Calu3 (cell line): ENCODE measurements at regions of chr10 and their contacts with region 1.

Region 1: GRCh38 chr10:123582084-123582989 is 83.8 kb upstream of the GPR26 start:
- DNase-seq: peak; percentile 77
- H3K4me3 Mint-ChIP-seq: no peak overlapping the region
- H3K27ac Mint-ChIP-seq: no peak overlapping the region
- H3K4me1 Mint-ChIP-seq: no peaks in the 10 kb centered on the region
- H3K27me3 Mint-ChIP-seq: peaks cover 70% of the 10 kb centered on the region
- CTCF ChIP-seq: peak; percentile 57

Region 2: GRCh38 chr10:123427392-123427791 is 154.9 kb before region 1 on chr10:
- CTCF ChIA-PET with region 1: no interaction called
- intact Hi-C with region 1: no loop called
- DNase-seq: no peak
- H3K4me3 Mint-ChIP-seq: no peak overlapping the region
- H3K27ac Mint-ChIP-seq: no peak overlapping the region
- H3K4me1 Mint-ChIP-seq: no peaks in the 10 kb centered on the region
- H3K27me3 Mint-ChIP-seq: peaks cover 28% of the 10 kb centered on the region
- CTCF ChIP-seq: no peak

Region 3: GRCh38 chr10:123868038-123869019 is 286.0 kb after region 1 on chr10:
- CTCF ChIA-PET with region 1: no interaction called
- intact Hi-C with region 1: loop called (anchors 10 kb)
- DNase-seq: no peak
- H3K4me3 Mint-ChIP-seq: no peak overlapping the region
- H3K27ac Mint-ChIP-seq: no peak overlapping the region
- H3K4me1 Mint-ChIP-seq: no peaks in the 10 kb centered on the region
- H3K27me3 Mint-ChIP-seq: peaks cover 37% of the 10 kb centered on the region
- CTCF ChIP-seq: no peak

Region 4: DNA sequence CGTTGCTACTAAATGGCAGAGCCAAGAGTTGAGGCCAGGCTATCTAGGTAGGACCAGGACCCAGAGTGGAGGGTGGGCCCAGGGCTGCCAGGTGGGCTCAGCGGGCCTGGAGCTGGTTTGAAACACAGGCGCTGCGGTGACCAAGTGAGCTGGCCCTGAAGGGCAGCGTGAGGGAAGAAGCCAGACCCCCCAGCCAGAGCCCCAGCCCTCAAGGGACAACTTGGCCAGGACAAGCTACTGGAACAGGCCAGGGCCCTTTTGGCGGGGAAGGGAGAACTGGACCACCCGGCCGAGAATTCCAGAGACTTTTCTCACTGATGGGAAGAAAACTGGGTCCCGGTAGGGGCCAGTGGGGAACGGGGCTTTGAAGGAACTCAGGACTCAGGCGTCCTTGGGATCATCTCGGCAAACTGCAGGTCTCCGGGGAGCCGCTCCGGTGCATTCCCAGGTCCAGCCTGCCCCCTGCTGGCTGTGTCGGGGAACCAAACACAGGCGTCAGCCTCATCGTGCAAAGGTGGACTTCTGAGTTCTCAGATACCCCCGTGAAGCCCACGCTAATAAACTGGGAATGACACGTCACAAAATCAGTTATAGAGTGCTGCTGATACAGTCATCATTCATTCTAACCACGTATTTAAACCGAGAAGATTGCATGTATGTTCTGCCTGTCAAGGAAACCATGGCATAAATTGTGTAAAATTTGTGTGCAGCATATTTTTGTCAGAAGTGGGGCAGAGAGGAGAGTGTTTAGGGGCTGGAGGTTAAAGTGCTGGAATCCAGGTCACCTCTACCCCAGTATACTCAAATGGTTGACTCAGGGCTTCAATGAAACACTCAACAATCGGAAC is 385.3 kb after region 1 on chr10:
- CTCF ChIA-PET with region 1: no interaction called
- intact Hi-C with region 1: loop called (anchors 1 kb)
- DNase-seq: peak; percentile 71
- H3K4me3 Mint-ChIP-seq: no peak overlapping the region
- H3K27ac Mint-ChIP-seq: no peak overlapping the region
- H3K4me1 Mint-ChIP-seq: peaks cover 13% of the 10 kb centered on the region
- H3K27me3 Mint-ChIP-seq: peaks cover 79% of the 10 kb centered on the region
- CTCF ChIP-seq: peak; percentile 58